Activated B cell treated with CpG ODN at 0.5 μM for 24 hours (primary cell): ENCODE measurements at regions of chr22 and their contacts with region 1.

Region 1: GRCh38 chr22:41022470-41023298 is 69.7 kb upstream of the EP300 start:
- DNase-seq: peak; percentile 87
- ATAC-seq: peak; percentile 75
- H3K4me3 Mint-ChIP-seq: peak overlapping the region; percentile 85
- H3K27ac Mint-ChIP-seq: peak overlapping the region; percentile 87
- H3K4me1 Mint-ChIP-seq: peaks cover 19% of the 10 kb centered on the region
- H3K27me3 Mint-ChIP-seq: no peaks in the 10 kb centered on the region
- CTCF ChIP-seq: no peak

Region 2: GRCh38 chr22:40856513-40857308 is 166.0 kb before region 1 on chr22 and contains the starts of genes ST13 and XPNPEP3:
- CTCF ChIA-PET with region 1: no interaction called
- POLR2A ChIA-PET with region 1: interaction called, 7 read pairs
- intact Hi-C with region 1: loop called (anchors 2 kb)
- DNase-seq: peak; percentile 96
- ATAC-seq: peak; percentile 90
- H3K4me3 Mint-ChIP-seq: peak within 1 kb of the TSS; percentile 98
- H3K27ac Mint-ChIP-seq: peak within 1 kb of the TSS; percentile 100
- H3K4me1 Mint-ChIP-seq: peaks cover 47% of the 10 kb centered on the region
- H3K27me3 Mint-ChIP-seq: no peaks in the 10 kb centered on the region
- CTCF ChIP-seq: no peak
- total RNA-seq, gene ST13: 183 and 221 TPM in 2 replicates
- total RNA-seq, gene XPNPEP3: 20.3 and 20.8 TPM in 2 replicates

Region 3: DNA sequence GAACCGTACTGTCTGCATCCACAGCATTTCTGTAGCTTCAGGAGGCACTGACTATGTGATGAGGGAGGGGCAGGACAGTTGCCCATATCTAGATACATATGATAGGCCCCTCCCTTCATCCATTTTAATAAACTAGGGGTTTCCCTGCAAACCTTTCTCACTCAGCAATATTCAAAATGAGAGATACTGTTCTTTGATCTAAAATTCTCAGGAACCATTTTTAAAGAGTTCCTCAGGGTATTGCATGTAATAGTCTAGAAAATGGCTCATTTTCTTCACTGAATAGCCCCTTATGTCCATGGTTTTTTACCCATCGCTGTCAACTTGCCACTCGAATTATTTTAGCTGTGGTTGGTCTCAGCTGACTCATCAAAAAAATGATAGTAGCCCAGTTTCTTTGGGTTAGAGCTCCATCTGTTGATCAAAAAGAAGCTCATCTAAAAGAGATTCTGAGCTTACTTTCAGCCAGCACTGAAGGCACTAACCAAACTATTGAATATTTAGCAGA is 123.8 kb before region 1 on chr22:
- CTCF ChIA-PET with region 1: no interaction called
- POLR2A ChIA-PET with region 1: no interaction called
- intact Hi-C with region 1: no loop called
- DNase-seq: no peak
- ATAC-seq: peak; percentile 71
- H3K4me3 Mint-ChIP-seq: no peak overlapping the region
- H3K27ac Mint-ChIP-seq: peak overlapping the region; percentile 21
- H3K4me1 Mint-ChIP-seq: peaks cover 3% of the 10 kb centered on the region
- H3K27me3 Mint-ChIP-seq: no peaks in the 10 kb centered on the region
- CTCF ChIP-seq: no peak

Region 4: DNA sequence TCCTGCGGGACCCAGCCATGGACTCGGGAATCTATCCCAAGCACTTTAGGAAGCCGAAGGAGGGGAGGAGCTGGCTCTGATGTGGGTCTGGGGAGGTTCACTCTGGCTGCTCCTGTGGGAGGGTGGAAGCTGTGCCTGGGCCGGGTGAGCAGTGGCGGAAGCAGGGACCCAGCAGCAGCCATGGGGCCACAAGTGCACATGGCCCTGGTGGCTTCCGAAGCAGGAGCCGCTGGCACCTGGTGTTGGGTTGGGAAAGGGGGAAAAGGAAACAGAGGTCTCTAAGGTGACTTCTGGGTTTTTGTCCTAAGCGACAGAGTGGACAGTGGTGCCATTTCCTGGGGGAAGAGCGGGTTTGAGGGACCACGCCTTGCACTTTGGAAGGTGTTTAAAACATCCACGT is 32.3 kb before region 1 on chr22:
- CTCF ChIA-PET with region 1: no interaction called
- POLR2A ChIA-PET with region 1: no interaction called
- intact Hi-C with region 1: no loop called
- DNase-seq: no peak
- ATAC-seq: no peak
- H3K4me3 Mint-ChIP-seq: no peak overlapping the region
- H3K27ac Mint-ChIP-seq: no peak overlapping the region
- H3K4me1 Mint-ChIP-seq: no peaks in the 10 kb centered on the region
- H3K27me3 Mint-ChIP-seq: peaks cover 22% of the 10 kb centered on the region
- CTCF ChIP-seq: no peak

Region 5: GRCh38 chr22:41070665-41071331 is 48.1 kb after region 1 on chr22:
- CTCF ChIA-PET with region 1: interaction called, 8 read pairs
- POLR2A ChIA-PET with region 1: interaction called, 70 read pairs
- intact Hi-C with region 1: loop called (anchors 1 kb)
- DNase-seq: no peak
- ATAC-seq: no peak
- H3K4me3 Mint-ChIP-seq: no peak overlapping the region
- H3K27ac Mint-ChIP-seq: no peak overlapping the region
- H3K4me1 Mint-ChIP-seq: peaks cover 33% of the 10 kb centered on the region
- H3K27me3 Mint-ChIP-seq: no peaks in the 10 kb centered on the region
- CTCF ChIP-seq: no peak

Region 6: GRCh38 chr22:41078931-41079330 is 56.2 kb after region 1 on chr22:
- CTCF ChIA-PET with region 1: no interaction called
- POLR2A ChIA-PET with region 1: interaction called, 14 read pairs
- intact Hi-C with region 1: no loop called
- DNase-seq: no peak
- ATAC-seq: peak; percentile 90
- H3K4me3 Mint-ChIP-seq: peak overlapping the region; percentile 35
- H3K27ac Mint-ChIP-seq: peak overlapping the region; percentile 37
- H3K4me1 Mint-ChIP-seq: peaks cover 25% of the 10 kb centered on the region
- H3K27me3 Mint-ChIP-seq: no peaks in the 10 kb centered on the region
- CTCF ChIP-seq: no peak

Region 7: DNA sequence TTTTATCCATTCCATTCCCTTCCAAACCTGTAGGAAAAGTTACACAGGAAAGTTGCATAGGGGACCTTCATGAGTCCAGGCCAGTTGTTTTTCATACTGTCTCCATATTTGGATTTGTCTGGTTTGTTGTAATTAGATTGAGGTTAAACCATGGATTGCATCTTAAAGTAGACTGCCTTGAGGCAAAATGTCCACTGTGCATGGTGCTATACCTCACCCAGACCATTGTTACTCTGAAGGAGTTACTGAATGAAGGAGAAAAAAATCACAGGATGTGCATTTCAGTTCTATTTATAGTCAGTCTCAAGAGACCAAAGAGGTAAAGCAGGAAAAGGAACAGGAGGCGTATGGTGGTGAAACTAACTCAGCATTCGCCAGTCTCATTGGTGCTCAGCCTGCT is 152.9 kb after region 1 on chr22:
- CTCF ChIA-PET with region 1: no interaction called
- POLR2A ChIA-PET with region 1: no interaction called
- intact Hi-C with region 1: no loop called
- DNase-seq: no peak
- ATAC-seq: no peak
- H3K4me3 Mint-ChIP-seq: no peak overlapping the region
- H3K27ac Mint-ChIP-seq: no peak overlapping the region
- H3K4me1 Mint-ChIP-seq: peaks cover 23% of the 10 kb centered on the region
- H3K27me3 Mint-ChIP-seq: no peaks in the 10 kb centered on the region
- CTCF ChIP-seq: no peak